HAP-1 (cell line): ENCODE measurements at regions of chr7 and their contacts with region 1.

Region 1: DNA sequence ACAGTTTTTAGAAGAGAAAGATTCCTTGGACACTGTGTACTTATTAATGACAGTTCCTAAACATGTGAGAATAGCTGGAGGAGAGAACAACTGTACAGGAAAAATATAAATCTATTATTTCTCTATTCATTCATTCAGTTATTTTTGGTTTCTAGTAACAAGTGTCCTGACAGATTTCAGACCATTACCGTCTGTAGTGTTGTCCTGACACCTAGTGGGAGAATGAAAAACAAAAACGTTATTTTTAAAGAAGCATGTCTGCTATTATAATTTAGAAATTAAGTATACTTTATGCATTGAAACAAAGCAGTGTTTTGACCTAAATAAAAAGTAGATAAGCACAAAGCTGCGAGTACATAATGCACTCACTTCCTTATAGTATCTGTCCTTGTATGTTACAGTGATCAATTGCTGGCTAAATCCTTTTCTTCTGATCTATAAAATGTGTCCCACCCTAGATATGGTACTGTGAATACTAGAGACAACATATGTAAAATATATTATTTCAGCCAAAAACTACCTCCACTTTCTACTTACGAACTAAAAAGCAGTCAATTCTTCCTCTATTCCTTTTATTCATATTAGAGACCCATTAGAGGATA is 575.6 kb downstream of the ARL4A start:
- DNase-seq: peak; percentile 13 to 59
- H3K4me3 ChIP-seq: no peak overlapping the region
- H3K4me1 ChIP-seq: peaks cover 3% of the 10 kb centered on the region; the same call in 1 of the 2 replicates
- H3K27me3 ChIP-seq: peaks cover 2% of the 10 kb centered on the region; the same call in 1 of the 2 replicates

Region 2: DNA sequence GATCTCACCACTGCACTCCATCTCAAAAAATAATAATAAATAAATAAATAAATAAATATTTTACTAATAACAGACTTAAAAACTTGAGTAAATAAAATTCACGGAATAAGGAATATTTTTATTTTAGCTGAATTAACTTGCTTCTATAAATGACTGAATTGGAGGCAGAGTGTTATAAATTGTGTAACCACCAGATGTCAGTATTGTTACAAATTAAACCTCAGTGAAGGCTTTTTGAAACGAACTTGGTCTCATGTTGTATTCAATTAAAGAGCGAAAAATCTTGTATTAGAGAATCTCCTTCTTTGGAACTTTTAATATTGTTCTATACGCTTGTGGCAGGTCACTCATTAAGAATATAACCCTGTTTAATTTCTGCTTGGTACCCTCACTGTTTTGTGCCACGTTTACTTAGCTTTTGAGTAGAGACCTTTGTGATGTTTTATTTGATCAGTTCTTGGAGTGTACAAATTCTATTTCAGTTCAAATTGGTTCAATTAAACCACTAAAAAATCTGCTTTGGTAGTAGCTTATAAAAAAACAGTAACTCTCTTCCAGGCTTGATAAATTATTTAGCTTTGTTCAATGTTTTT is 738.1 kb before region 1 on chr7:
- in situ Hi-C with region 1: loop called (anchors 25 kb)
- DNase-seq: peak in 1 of 2 experiments; percentile 61
- H3K4me3 ChIP-seq: no peak overlapping the region
- H3K4me1 ChIP-seq: no peaks in the 10 kb centered on the region
- H3K27me3 ChIP-seq: peaks cover 11% of the 10 kb centered on the region; the same call in 1 of the 2 replicates

Region 3: DNA sequence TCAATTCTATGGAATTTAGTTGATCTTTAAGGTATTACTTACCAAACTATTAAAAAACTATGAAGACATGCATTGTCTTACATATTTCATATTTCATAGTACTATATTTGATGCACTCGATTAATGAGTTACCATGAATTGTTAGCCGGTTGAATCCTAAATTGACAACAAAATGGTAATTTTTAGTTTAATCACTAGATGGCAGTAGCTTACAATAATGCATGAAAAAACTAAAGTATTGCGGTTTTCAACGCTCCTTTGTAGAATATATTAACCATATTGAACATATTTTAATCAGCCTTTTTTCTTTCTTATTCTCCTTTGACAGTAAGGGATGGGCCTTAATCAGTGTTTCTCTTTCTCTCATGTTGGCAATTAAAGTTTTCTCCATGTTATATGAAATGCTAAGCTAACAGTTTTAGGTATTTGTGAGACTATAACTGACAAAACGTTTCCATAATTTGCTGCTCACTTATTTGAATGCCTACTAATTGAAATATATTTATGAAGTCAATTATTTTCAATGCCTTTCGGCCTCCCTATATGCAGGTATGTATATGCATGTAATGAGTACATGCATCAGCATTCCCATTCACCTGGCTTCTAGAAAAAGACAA is 624.1 kb before region 1 on chr7:
- in situ Hi-C with region 1: loop called (anchors 10 kb)
- DNase-seq: peak in 1 of 2 experiments; percentile 68
- H3K4me3 ChIP-seq: no peak overlapping the region
- H3K4me1 ChIP-seq: no peaks in the 10 kb centered on the region
- H3K27me3 ChIP-seq: peaks cover 6% of the 10 kb centered on the region

Region 4: GRCh38 chr7:12674849-12675248 is 588.2 kb before region 1 on chr7:
- in situ Hi-C with region 1: loop called (anchors 10 kb)
- DNase-seq: peak; percentile 60 to 61
- H3K4me3 ChIP-seq: no peak overlapping the region
- H3K4me1 ChIP-seq: no peaks in the 10 kb centered on the region; the same call in 1 of the 2 replicates
- H3K27me3 ChIP-seq: no peaks in the 10 kb centered on the region

Region 5: DNA sequence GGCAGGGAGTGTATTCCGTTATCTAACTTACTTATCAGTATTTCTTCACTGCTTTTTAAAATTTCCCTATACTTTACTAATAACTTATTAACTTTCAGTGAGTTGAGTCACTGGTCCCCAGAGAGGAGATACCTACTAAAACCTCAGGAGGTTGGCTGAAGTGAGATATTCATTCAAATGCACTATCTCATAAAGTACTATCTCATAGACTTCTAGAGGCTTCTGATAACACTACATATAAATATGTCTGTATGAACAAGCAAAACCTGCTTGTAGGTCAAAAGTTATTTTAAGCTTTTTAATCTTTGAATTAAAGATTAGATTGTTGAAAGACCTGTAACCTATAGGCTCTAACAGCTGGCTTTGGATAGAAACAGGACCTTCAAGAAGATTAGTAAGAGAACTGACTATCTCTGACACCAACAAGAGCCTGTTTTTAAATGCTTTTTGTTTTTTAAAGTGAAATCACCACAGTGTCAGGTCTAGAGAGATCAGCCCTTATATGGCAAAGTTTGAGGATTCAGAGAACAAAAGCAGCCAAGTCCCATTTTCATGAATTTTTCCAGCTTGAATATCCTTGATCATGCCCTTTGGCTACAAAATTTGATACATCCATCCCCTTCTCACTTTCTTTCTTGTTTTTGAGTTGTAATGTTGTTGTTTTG is 333.4 kb before region 1 on chr7:
- in situ Hi-C with region 1: no loop called
- DNase-seq: no peak
- H3K4me3 ChIP-seq: no peak overlapping the region
- H3K4me1 ChIP-seq: peaks cover 8% of the 10 kb centered on the region
- H3K27me3 ChIP-seq: no peaks in the 10 kb centered on the region

Region 6: GRCh38 chr7:13433946-13434345 is 170.9 kb after region 1 on chr7:
- in situ Hi-C with region 1: no loop called
- DNase-seq: no peak
- H3K4me3 ChIP-seq: no peak overlapping the region
- H3K4me1 ChIP-seq: no peaks in the 10 kb centered on the region
- H3K27me3 ChIP-seq: no peaks in the 10 kb centered on the region